ENCODE measurements at regions of chr12 and their contacts with region 1.

Region 1: GRCh38 chr12:56724972-56725722 is at the start of gene NACA:
- DNase-seq: peak; percentile 96 to 100
- H3K4me3 ChIP-seq: peak within 1 kb of the TSS; percentile 72 to 84
- H3K27ac ChIP-seq: peak within 1 kb of the TSS; percentile 89 to 90
- H3K4me1 ChIP-seq: peaks cover 0 to 26% of the 10 kb centered on the region in 2 donors
- H3K27me3 ChIP-seq: no peaks in the 10 kb centered on the region
- CTCF ChIP-seq: no peak
- total RNA-seq, gene NACA: 490 TPM

Region 2: DNA sequence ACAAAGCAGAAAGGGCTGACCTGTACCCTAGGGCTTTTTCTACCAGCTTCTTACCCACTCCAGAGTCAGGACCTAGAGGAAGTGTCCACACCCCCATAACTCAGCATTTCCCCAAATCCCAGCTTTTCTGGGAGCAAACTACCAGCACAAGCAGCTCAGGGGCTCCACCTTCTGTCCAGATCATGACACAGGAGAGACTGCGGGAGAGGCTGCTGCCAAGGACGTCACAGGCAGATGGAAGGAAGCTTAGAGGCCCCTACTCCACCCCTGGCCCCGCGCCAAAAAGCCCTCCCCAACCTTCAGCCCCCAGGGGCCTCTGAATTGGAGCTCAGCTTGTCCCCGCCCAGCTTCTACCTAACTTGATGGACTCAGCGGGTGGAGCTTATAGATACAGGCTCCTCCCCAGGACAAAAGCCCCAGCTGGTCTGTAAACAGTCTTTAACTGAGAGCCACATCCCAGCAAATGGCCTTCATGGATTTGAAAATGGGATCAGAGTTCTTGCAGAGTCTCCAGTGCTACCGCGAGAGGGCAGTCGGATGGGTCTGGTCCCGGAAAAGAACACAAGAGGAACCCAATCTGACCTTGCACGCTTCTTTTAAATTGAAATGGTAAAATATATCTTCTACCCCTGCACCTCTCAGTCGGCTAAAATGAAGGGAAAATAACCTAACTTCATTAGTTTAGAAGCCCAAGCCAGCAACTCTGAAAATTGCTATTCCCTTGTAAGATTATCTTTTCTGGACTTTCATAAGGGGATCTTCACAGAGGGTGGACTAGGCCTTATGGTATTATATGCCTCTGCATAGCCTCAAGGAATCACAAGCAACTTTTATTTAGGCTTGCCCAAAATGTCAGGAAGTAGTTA is 88.2 kb before region 1 on chr12:
- intact Hi-C with region 1: loop called (anchors 2 kb)
- DNase-seq: peak; percentile 99 to 100
- H3K4me3 ChIP-seq: peak overlapping the region; percentile 78 to 93
- H3K27ac ChIP-seq: peak overlapping the region; percentile 82 to 95
- H3K4me1 ChIP-seq: peaks cover 11 to 30% of the 10 kb centered on the region in 2 donors
- H3K27me3 ChIP-seq: no peaks in the 10 kb centered on the region
- CTCF ChIP-seq: peak; percentile 30 to 68 (median 53)

Region 3: DNA sequence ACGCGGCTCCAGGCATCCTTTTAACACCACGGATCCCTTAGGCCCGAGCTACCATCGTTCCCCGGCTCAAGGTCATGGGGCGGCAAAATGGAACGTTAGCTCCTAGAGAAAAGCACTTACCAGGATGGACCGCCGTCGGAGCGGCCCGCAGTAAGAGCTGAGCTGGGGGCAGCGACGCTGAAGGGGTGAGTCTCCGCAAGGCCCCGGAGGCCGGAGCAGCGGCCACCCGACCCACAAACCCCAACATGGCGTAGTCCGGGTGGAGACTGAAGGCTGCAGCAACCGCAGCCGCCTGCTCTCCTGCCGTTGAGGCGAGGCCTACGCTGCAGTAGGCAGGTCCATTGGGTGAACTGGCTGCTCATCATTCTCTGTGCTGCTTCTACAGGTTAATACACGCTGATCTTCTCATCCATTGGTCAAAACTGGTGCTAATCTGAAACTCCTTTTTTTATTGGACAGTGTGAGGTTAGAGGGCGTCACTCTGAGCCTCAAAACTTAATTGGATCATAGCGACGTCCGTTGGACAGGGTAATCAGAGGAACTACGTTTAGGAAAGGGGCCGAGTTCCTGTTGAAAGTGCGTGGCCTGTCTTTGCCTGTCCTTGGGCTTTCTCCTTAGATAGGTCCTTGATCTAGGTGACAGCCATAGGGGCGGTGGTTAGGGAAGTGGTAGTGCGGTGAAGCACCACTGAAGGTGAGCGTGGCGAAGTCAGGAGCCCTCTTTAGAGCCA is 79.3 kb before region 1 on chr12 and contains the start of gene ATP5F1B:
- intact Hi-C with region 1: loop called (anchors 1 kb)
- DNase-seq: peak; percentile 97 to 98
- H3K4me3 ChIP-seq: peak within 1 kb of the TSS; percentile 94
- H3K27ac ChIP-seq: peak within 1 kb of the TSS; percentile 88 to 91
- H3K4me1 ChIP-seq: peaks cover 10 to 12% of the 10 kb centered on the region in 2 donors
- H3K27me3 ChIP-seq: no peaks in the 10 kb centered on the region
- CTCF ChIP-seq: no peak
- total RNA-seq, gene ATP5F1B: 197 TPM

Region 4: GRCh38 chr12:56688129-56688845 is 36.9 kb before region 1 on chr12 and contains the start of gene PTGES3:
- intact Hi-C with region 1: loop called (anchors 1 kb)
- DNase-seq: peak; percentile 93 to 99
- H3K4me3 ChIP-seq: peak within 1 kb of the TSS; percentile 87 to 92
- H3K27ac ChIP-seq: peak within 1 kb of the TSS; percentile 99 to 100
- H3K4me1 ChIP-seq: peaks cover 8 to 22% of the 10 kb centered on the region in 2 donors
- H3K27me3 ChIP-seq: no peaks in the 10 kb centered on the region
- CTCF ChIP-seq: no peak
- total RNA-seq, gene PTGES3: 62.2 TPM

Region 5: DNA sequence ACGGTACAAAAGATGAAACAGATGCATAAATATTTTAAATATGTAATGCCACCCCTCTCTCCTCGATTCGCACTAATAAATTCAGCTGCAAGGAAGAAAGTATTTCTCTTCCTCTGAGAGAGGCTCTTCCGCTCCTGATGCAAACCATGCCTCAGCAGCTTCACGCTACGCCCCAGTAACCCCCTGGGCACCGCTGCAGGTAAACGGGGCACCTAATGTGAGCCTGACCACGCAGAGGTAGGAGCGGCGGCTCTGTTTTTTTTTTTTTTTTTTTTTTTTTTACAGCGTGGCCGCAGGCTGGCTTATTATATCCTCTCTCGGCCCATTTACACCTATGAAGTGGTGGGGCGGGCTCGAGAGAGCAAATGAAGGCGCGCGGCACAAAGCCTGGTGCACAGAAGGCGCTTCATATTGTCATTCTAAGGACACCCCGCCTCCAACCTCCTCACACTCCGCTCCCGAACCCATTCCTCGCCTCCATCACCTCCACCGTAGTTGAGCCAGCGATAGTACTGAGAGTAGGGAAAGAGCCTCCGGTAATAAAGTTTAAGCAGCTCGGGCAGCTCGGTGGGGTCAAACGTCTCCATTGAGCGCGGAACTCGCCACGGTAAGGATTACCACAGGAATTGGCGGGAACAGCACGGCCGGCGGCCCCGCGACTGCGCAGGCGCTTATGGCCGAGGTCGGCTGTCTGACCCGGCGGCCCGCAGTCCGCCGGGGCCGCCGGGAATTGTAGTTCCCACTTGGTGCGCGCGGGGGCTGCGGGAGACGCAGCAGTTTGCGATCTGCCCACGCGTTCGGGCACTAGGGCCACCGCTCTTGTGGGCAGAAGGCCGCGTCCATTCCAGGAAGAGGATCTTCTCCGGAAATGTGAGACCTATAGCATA is 26.8 kb after region 1 on chr12 and contains the start of gene PRIM1:
- intact Hi-C with region 1: loop called (anchors 2 kb)
- DNase-seq: peak; percentile 18 to 90
- H3K4me3 ChIP-seq: peak within 1 kb of the TSS; percentile 74 to 80
- H3K27ac ChIP-seq: no peak within 1 kb of the TSS
- H3K4me1 ChIP-seq: no peaks in the 10 kb centered on the region
- H3K27me3 ChIP-seq: no peaks in the 10 kb centered on the region
- CTCF ChIP-seq: peak in 2 of 3 experiments; percentile 14 to 22
- total RNA-seq, gene PRIM1: 20.9 TPM

Measured in ascending aorta (tissue), 2 donors.